Activated CD8-positive, alpha-beta T cell treated with anti-CD3 and anti-CD28 coated beads for 36 hours (primary cell): ENCODE measurements at regions of chr4 and their contacts with region 1.

Region 1: DNA sequence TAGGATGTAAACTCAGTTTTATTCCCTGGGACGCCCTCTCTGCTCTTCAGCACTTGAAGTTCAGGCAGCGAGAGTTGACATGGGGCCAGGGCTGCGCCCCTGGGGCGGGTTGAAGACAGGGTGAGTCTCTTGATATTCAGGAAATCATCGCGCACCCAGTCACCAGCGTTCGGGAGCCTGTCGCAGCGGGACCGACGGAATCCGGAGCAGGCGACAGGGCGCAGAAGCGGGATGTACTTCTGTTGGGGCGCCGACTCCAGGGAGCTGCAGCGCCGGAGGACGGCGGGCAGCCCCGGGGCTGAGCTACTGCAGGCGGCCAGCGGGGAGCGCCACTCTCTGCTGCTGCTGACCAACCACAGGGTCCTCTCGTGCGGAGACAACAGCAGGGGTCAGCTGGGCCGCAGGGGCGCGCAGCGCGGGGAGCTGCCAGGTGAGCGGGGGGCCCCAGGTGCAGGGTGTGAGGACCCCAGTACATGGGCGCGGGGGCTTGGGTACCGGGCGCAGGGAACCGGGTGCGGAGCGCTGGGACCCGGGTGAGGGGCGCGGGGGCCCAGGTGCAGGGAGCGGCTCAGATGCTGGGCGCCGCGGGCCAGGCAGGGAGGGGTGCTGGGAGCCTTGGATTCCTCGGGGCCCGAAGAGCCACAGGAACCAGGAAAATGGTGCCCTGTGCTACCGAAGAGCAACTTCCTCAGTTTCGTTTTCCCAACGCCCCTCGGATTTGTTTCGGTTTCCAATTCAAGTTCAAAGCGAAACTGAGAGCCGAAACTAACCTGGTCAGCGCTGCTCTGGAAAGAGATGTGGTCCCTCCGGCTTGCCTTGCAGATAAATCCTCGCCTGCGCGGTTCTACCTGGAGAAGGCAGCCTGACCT is at the start of gene HERC6:
- DNase-seq: peak; percentile 89
- ATAC-seq: peak; percentile 58
- H3K4me3 Mint-ChIP-seq: peak within 1 kb of the TSS; percentile 78
- H3K27ac Mint-ChIP-seq: peak within 1 kb of the TSS; percentile 72
- H3K4me1 Mint-ChIP-seq: peaks cover 34% of the 10 kb centered on the region
- H3K27me3 Mint-ChIP-seq: no peaks in the 10 kb centered on the region
- CTCF ChIP-seq: peak; percentile 68
- total RNA-seq, gene HERC6: 3.0 to 4.0 TPM

Region 2: DNA sequence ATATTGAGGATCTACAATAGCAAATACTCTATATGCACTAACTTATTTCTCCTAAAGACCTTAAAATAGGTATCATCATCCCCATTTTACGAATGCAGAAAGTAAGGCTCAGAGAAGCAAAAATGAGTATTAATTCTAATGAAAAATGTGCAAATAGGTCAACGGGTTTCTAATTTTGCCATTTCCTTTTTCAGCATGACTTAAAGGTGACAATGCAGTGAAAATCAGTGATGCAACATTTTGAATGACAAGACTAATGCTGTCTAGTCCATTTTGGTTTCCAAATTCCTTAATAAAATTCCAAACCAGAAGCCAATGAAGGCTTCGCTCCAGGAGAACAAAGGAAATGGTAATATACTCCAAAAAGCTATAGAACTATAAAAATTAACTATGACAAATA is 616.6 kb before region 1 on chr4:
- CTCF ChIA-PET with region 1: no interaction called
- POLR2A ChIA-PET with region 1: no interaction called
- intact Hi-C with region 1: no loop called
- DNase-seq: no peak
- ATAC-seq: no peak
- H3K4me3 Mint-ChIP-seq: no peak overlapping the region
- H3K27ac Mint-ChIP-seq: no peak overlapping the region
- H3K4me1 Mint-ChIP-seq: no peaks in the 10 kb centered on the region
- H3K27me3 Mint-ChIP-seq: peaks cover 2% of the 10 kb centered on the region
- CTCF ChIP-seq: no peak

Region 3: GRCh38 chr4:88359558-88359957 is 19.4 kb before region 1 on chr4:
- CTCF ChIA-PET with region 1: no interaction called
- POLR2A ChIA-PET with region 1: no interaction called
- intact Hi-C with region 1: no loop called
- DNase-seq: no peak
- ATAC-seq: no peak
- H3K4me3 Mint-ChIP-seq: no peak overlapping the region
- H3K27ac Mint-ChIP-seq: no peak overlapping the region
- H3K4me1 Mint-ChIP-seq: no peaks in the 10 kb centered on the region
- H3K27me3 Mint-ChIP-seq: no peaks in the 10 kb centered on the region
- CTCF ChIP-seq: no peak

Region 4: GRCh38 chr4:88456757-88457306 is 77.9 kb after region 1 on chr4 and contains the start of gene HERC5:
- CTCF ChIA-PET with region 1: interaction called, 6 read pairs
- POLR2A ChIA-PET with region 1: interaction called, 3 read pairs
- intact Hi-C with region 1: loop called (anchors 5 kb)
- DNase-seq: peak; percentile 93
- ATAC-seq: peak; percentile 95
- H3K4me3 Mint-ChIP-seq: peak within 1 kb of the TSS; percentile 97
- H3K27ac Mint-ChIP-seq: peak within 1 kb of the TSS; percentile 99
- H3K4me1 Mint-ChIP-seq: peaks cover 12% of the 10 kb centered on the region
- H3K27me3 Mint-ChIP-seq: peaks cover 5% of the 10 kb centered on the region
- CTCF ChIP-seq: no peak
- total RNA-seq, gene HERC5: 10.2 to 10.5 TPM